ENCODE measurements at regions of chr2 and their contacts with region 1.

Region 1: GRCh38 chr2:47339745-47340541 is 63.0 kb upstream of the MSH2 start:
- DNase-seq: no peak
- H3K4me3 ChIP-seq: no peak overlapping the region
- H3K27ac ChIP-seq: no peak overlapping the region
- H3K4me1 ChIP-seq: peaks cover 8% of the 10 kb centered on the region
- H3K27me3 ChIP-seq: no peaks in the 10 kb centered on the region
- CTCF ChIP-seq: no peak

Region 2: GRCh38 chr2:47272031-47272864 is 67.7 kb before region 1 on chr2:
- CTCF ChIA-PET with region 1: no interaction called
- POLR2A ChIA-PET with region 1: no interaction called
- intact Hi-C with region 1: no loop called
- DNase-seq: peak; percentile 55
- H3K4me3 ChIP-seq: peak overlapping the region; percentile 34
- H3K27ac ChIP-seq: no peak overlapping the region
- H3K4me1 ChIP-seq: peaks cover 4% of the 10 kb centered on the region
- H3K27me3 ChIP-seq: no peaks in the 10 kb centered on the region
- CTCF ChIP-seq: peak; percentile 97

Region 3: GRCh38 chr2:47357483-47357882 is 17.5 kb after region 1 on chr2:
- CTCF ChIA-PET with region 1: interaction called, 4 read pairs
- POLR2A ChIA-PET with region 1: interaction called, 25 read pairs
- intact Hi-C with region 1: no loop called
- DNase-seq: peak; percentile 40
- H3K4me3 ChIP-seq: no peak overlapping the region
- H3K27ac ChIP-seq: no peak overlapping the region
- H3K4me1 ChIP-seq: no peaks in the 10 kb centered on the region
- H3K27me3 ChIP-seq: no peaks in the 10 kb centered on the region
- CTCF ChIP-seq: no peak

Region 4: GRCh38 chr2:47386551-47386950 is 46.6 kb after region 1 on chr2:
- CTCF ChIA-PET with region 1: interaction called, 86 read pairs
- POLR2A ChIA-PET with region 1: interaction called, 7 read pairs
- intact Hi-C with region 1: loop called (anchors 1 kb)
- DNase-seq: no peak
- H3K4me3 ChIP-seq: no peak overlapping the region
- H3K27ac ChIP-seq: no peak overlapping the region
- H3K4me1 ChIP-seq: no peaks in the 10 kb centered on the region
- H3K27me3 ChIP-seq: no peaks in the 10 kb centered on the region
- CTCF ChIP-seq: no peak

Region 5: DNA sequence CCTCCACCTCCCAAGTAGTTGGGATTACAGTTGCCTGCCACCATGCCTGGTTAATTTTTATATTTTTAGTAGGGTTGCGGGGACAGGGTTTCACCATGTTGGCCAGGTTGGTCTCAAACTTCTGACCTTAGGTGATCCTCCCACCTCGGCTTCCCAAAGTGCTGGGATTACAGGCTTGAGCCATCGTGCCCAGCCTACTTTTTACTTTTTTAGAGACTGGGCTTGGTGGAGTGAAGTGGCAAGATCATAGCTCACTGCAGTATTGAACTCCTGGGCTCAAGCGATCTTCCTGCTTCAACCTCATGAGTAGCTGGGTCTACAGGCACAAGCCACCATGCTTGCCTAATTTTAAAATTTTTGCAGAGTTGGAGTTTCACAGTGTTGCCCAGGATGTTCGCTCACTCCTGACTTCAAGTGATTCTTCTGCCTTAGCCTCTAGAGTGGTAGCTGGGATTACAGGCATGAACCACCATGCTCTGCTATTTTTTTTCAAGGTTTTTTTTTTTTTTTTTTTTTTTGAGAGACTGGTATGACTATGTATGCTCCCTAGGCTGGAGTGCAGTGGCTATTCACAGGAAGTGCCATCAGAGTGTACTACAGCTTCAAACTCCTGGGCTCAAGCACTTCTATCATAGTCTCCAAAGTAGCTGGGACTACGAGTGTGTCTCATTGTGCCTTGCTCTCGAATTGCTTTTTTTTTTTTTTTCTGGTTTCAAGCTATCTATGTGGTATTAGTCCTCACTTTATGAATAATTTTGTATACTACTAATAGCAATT is 74.9 kb after region 1 on chr2:
- CTCF ChIA-PET with region 1: interaction called, 20 read pairs
- POLR2A ChIA-PET with region 1: no interaction called
- intact Hi-C with region 1: no loop called
- DNase-seq: no peak
- H3K4me3 ChIP-seq: no peak overlapping the region
- H3K27ac ChIP-seq: no peak overlapping the region
- H3K4me1 ChIP-seq: no peaks in the 10 kb centered on the region
- H3K27me3 ChIP-seq: no peaks in the 10 kb centered on the region
- CTCF ChIP-seq: no peak

Region 6: GRCh38 chr2:47767880-47768609 is 428.1 kb after region 1 on chr2:
- CTCF ChIA-PET with region 1: interaction called, 19 read pairs
- POLR2A ChIA-PET with region 1: no interaction called
- intact Hi-C with region 1: loop called (anchors 2 kb)
- DNase-seq: peak; percentile 57
- H3K4me3 ChIP-seq: no peak overlapping the region
- H3K27ac ChIP-seq: no peak overlapping the region
- H3K4me1 ChIP-seq: no peaks in the 10 kb centered on the region
- H3K27me3 ChIP-seq: no peaks in the 10 kb centered on the region
- CTCF ChIP-seq: peak; percentile 99

Region 7: DNA sequence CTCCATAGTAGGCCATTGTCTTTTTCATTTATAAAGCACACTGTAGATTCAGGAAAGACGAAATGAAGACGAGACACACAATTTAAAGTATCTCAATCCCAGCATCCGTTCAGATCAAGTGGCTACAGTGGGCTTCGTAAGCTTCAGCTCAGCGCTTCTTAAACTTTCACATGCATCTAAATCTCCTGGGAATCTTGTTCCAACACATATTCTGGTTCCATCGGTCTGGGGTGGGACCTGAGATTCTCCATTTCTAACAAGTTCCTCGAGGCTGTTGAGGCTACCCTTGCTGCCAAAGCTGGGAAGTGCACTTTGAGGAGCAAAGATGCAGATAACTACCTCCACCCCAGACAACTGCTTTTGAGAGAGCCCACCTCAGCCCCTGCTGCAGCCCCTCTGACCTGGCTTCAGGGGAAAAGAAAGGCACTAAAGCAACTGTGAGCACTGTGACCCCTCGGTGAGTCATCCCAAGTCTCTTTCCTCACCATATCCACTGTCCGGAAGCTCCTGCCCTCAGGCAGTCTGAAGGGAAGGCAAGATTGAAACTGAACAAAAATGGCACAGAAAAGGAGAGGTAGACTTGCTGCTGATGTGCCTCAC is 767.5 kb after region 1 on chr2:
- CTCF ChIA-PET with region 1: no interaction called
- POLR2A ChIA-PET with region 1: no interaction called
- intact Hi-C with region 1: loop called (anchors 10 kb)
- DNase-seq: peak; percentile 24
- H3K4me3 ChIP-seq: no peak overlapping the region
- H3K27ac ChIP-seq: no peak overlapping the region
- H3K4me1 ChIP-seq: peaks cover 9% of the 10 kb centered on the region
- H3K27me3 ChIP-seq: no peaks in the 10 kb centered on the region
- CTCF ChIP-seq: no peak